A549 (cell line): ENCODE measurements at regions of chr2 and their contacts with region 1.

Region 1: DNA sequence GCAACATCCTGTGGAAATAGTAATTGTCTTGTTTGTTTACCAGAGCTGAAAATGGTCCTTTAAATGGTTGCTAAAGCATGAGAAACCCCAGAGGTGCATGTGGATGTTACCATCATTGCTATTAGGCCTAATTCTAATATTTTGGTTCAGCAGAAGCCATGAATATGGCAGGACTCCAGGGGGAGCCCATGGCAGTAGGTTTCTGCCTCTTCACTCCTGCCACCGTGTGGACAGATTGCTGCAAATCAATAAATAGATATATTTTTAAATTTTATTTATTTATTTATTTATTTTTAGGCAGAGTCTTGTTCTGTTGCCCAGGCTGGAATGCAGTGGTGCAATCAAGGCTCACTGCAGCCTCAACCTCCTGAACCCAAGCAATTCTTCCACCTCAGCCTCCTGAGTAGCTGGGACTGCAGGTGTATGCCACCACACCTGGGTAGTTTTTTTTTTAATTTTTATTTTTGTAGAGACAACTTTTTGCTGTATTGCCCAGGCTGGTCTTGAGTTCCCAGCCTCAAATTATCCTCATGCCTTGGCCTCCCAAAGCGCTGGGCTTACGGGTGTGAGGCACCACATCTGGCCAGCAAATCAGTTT is 54.9 kb upstream of the CAPN13 start:
- DNase-seq: peak; percentile 59 to 87
- ATAC-seq: peak; percentile 68 to 87; a peak in 5 of 6 replicates
- H3K4me3 ChIP-seq: no peak overlapping the region
- H3K27ac ChIP-seq: no peak overlapping the region
- H3K4me1 ChIP-seq: no peaks in the 10 kb centered on the region
- CTCF ChIP-seq: peak; percentile 96
- EP300 ChIP-seq: no peak
- POLR2A ChIP-seq: no peak
- RAD21 ChIP-seq: peak; percentile 73 to 80

Region 2: GRCh38 chr2:30828586-30828985 is 33.6 kb before region 1 on chr2:
- CTCF ChIA-PET with region 1: interaction called, 10 read pairs
- POLR2A ChIA-PET with region 1: no interaction called
- DNase-seq: no peak
- ATAC-seq: no peak
- H3K4me3 ChIP-seq: no peak overlapping the region
- H3K27ac ChIP-seq: no peak overlapping the region
- H3K4me1 ChIP-seq: no peaks in the 10 kb centered on the region
- CTCF ChIP-seq: no peak
- EP300 ChIP-seq: no peak
- POLR2A ChIP-seq: no peak
- RAD21 ChIP-seq: no peak

Region 3: GRCh38 chr2:30871980-30872789 is 10.0 kb after region 1 on chr2:
- CTCF ChIA-PET with region 1: interaction called, 22 read pairs
- POLR2A ChIA-PET with region 1: no interaction called
- DNase-seq: no peak
- ATAC-seq: no peak
- H3K4me3 ChIP-seq: no peak overlapping the region
- H3K27ac ChIP-seq: no peak overlapping the region
- H3K4me1 ChIP-seq: no peaks in the 10 kb centered on the region
- CTCF ChIP-seq: no peak
- EP300 ChIP-seq: no peak
- POLR2A ChIP-seq: no peak
- RAD21 ChIP-seq: no peak